ENCODE measurements at regions of chrX and their contacts with region 1.

Region 1: GRCh38 chrX:103845165-103845653 is 13.2 kb upstream of the RAB9B start:
- DNase-seq: peak; percentile 80
- H3K4me3 ChIP-seq: no peak overlapping the region
- H3K27ac ChIP-seq: no peak overlapping the region
- H3K4me1 ChIP-seq: no peaks in the 10 kb centered on the region
- H3K27me3 ChIP-seq: no peaks in the 10 kb centered on the region
- CTCF ChIP-seq: peak; percentile 66

Region 2: DNA sequence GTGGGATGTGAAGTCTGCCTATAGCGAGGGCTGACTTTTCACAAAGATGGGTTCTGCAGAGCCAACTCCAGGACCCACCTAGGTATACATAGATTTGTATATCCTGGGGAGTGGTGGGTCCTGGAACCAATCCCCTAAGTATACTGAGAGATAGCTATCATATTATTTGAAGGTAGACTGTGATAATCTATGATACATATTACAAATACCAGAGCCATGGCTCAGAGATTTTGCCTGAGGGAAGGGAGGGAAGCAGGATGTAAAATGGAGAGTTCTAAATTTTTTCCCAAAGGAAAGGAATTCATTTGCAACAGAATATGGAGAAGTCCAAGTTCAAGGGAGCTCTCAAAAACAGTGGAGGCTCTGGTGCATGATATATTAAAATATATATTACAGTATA is 230.2 kb before region 1 on chrX:
- intact Hi-C with region 1: no loop called
- DNase-seq: no peak
- H3K4me3 ChIP-seq: no peak overlapping the region
- H3K27ac ChIP-seq: no peak overlapping the region
- H3K4me1 ChIP-seq: no peaks in the 10 kb centered on the region
- H3K27me3 ChIP-seq: no peaks in the 10 kb centered on the region
- CTCF ChIP-seq: no peak

Region 3: GRCh38 chrX:103656632-103657031 is 188.6 kb before region 1 on chrX:
- intact Hi-C with region 1: no loop called
- DNase-seq: no peak
- H3K4me3 ChIP-seq: no peak overlapping the region
- H3K27ac ChIP-seq: no peak overlapping the region
- H3K4me1 ChIP-seq: no peaks in the 10 kb centered on the region
- H3K27me3 ChIP-seq: no peaks in the 10 kb centered on the region
- CTCF ChIP-seq: no peak

Region 4: GRCh38 chrX:104136241-104137019 is 291.2 kb after region 1 on chrX:
- intact Hi-C with region 1: loop called (anchors 10 kb)
- DNase-seq: peak; percentile 77
- H3K4me3 ChIP-seq: no peak overlapping the region
- H3K27ac ChIP-seq: no peak overlapping the region
- H3K4me1 ChIP-seq: no peaks in the 10 kb centered on the region
- H3K27me3 ChIP-seq: no peaks in the 10 kb centered on the region
- CTCF ChIP-seq: peak; percentile 84

Measured in colonic mucosa (tissue), 4 donors.